ENCODE measurements at regions of chr22 and their contacts with region 1.

Region 1: GRCh38 chr22:22810018-22810427 is 77.6 kb upstream of the IGLL5 start:
- DNase-seq: peak; percentile 82
- H3K4me3 Mint-ChIP-seq: no peak overlapping the region
- H3K27ac Mint-ChIP-seq: no peak overlapping the region
- H3K4me1 Mint-ChIP-seq: peaks cover 8% of the 10 kb centered on the region
- H3K27me3 Mint-ChIP-seq: peaks cover 29% of the 10 kb centered on the region

Region 2: GRCh38 chr22:22770280-22770871 is 39.6 kb before region 1 on chr22:
- CTCF ChIA-PET with region 1: interaction called, 15 read pairs
- POLR2A ChIA-PET with region 1: no interaction called
- DNase-seq: peak; percentile 50
- H3K4me3 Mint-ChIP-seq: no peak overlapping the region
- H3K27ac Mint-ChIP-seq: no peak overlapping the region
- H3K4me1 Mint-ChIP-seq: no peaks in the 10 kb centered on the region
- H3K27me3 Mint-ChIP-seq: peaks cover 9% of the 10 kb centered on the region

Region 3: DNA sequence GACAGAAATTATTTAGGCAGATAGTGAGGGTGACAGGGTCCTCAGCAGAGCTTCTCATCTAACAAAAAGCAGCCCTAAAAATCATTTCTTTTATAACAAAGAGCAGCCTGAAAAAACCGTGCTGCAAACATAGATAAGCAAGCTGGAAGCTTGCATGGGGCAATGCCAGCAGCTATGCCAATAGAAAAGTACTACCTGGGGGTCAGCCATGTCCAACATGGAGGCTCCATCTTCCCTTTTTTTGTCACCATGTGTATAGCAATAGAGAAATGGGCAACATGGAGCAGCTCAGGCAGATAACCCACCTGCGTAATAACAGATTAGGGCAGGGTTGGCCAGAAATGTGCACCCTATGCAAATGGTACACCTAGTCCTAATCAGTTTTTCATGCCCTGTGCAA is 20.2 kb after region 1 on chr22:
- CTCF ChIA-PET with region 1: interaction called, 13 read pairs
- POLR2A ChIA-PET with region 1: no interaction called
- DNase-seq: no peak
- H3K4me3 Mint-ChIP-seq: no peak overlapping the region
- H3K27ac Mint-ChIP-seq: no peak overlapping the region
- H3K4me1 Mint-ChIP-seq: peaks cover 7% of the 10 kb centered on the region
- H3K27me3 Mint-ChIP-seq: peaks cover 41% of the 10 kb centered on the region

Region 4: DNA sequence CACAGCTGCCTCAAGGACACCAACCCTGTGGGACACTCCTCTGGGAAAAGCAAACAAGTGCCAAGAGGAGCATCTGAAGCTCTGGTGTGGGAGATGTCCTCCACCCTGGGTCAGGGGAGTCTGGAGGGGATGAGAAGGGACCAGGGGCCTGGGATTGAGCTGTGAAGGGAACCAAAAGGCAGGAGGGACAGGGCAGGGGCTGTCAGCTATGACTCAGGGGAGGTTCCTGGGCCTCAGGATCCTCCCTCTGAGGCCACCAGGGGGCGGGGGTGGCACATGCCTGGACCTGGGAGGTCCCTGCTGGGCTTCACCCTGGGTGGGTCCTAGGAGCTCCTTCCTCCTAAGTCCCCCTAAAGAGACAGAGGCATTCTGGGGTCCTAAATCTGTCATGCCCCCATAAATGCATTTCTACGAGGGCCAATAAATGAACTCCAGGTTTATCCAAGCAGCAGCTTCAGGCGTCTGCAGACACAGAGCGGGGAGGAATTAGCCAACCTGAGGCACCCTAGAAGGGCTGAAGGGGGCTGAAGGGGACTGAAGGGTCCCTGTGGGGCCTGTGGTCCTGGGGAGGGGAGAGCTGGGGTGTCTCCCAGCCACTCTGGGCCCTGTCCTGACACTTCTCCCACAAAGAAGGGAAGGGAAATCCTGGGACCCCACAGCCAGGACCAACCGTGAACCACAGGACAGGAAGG is 45.7 kb after region 1 on chr22:
- CTCF ChIA-PET with region 1: interaction called, 127 read pairs
- POLR2A ChIA-PET with region 1: no interaction called
- DNase-seq: peak; percentile 51
- H3K4me3 Mint-ChIP-seq: no peak overlapping the region
- H3K27ac Mint-ChIP-seq: no peak overlapping the region
- H3K4me1 Mint-ChIP-seq: no peaks in the 10 kb centered on the region
- H3K27me3 Mint-ChIP-seq: peaks cover 31% of the 10 kb centered on the region

Region 5: GRCh38 chr22:22942511-22943329 is 132.7 kb after region 1 on chr22:
- CTCF ChIA-PET with region 1: interaction called, 14 read pairs
- POLR2A ChIA-PET with region 1: no interaction called
- DNase-seq: peak; percentile 84
- H3K4me3 Mint-ChIP-seq: no peak overlapping the region
- H3K27ac Mint-ChIP-seq: no peak overlapping the region
- H3K4me1 Mint-ChIP-seq: peaks cover 19% of the 10 kb centered on the region
- H3K27me3 Mint-ChIP-seq: peaks cover 15% of the 10 kb centered on the region